Gastrocnemius medialis (tissue), 4 donors: ENCODE measurements at regions of chr15 and their contacts with region 1.

Region 1: GRCh38 chr15:84658080-84658787 is at the start of gene NMB:
- DNase-seq: peak; percentile 45 to 69
- ATAC-seq: peak; percentile 49 to 51
- H3K4me3 ChIP-seq: peak within 1 kb of the TSS; percentile 54 to 85 (median 58)
- H3K27ac ChIP-seq: peak within 1 kb of the TSS; percentile 74 to 86 (median 83)
- H3K4me1 ChIP-seq: peaks cover 12 to 20% of the 10 kb centered on the region in 2 donors
- H3K27me3 ChIP-seq: no peaks in the 10 kb centered on the region
- CTCF ChIP-seq: peak; percentile 30 to 88 (median 60)
- POLR2A ChIP-seq: no peak
- total RNA-seq, gene NMB: 0.94 to 1.6 (median 1.6) TPM in 3 of 4 donors, not detected in the other

Region 2: DNA sequence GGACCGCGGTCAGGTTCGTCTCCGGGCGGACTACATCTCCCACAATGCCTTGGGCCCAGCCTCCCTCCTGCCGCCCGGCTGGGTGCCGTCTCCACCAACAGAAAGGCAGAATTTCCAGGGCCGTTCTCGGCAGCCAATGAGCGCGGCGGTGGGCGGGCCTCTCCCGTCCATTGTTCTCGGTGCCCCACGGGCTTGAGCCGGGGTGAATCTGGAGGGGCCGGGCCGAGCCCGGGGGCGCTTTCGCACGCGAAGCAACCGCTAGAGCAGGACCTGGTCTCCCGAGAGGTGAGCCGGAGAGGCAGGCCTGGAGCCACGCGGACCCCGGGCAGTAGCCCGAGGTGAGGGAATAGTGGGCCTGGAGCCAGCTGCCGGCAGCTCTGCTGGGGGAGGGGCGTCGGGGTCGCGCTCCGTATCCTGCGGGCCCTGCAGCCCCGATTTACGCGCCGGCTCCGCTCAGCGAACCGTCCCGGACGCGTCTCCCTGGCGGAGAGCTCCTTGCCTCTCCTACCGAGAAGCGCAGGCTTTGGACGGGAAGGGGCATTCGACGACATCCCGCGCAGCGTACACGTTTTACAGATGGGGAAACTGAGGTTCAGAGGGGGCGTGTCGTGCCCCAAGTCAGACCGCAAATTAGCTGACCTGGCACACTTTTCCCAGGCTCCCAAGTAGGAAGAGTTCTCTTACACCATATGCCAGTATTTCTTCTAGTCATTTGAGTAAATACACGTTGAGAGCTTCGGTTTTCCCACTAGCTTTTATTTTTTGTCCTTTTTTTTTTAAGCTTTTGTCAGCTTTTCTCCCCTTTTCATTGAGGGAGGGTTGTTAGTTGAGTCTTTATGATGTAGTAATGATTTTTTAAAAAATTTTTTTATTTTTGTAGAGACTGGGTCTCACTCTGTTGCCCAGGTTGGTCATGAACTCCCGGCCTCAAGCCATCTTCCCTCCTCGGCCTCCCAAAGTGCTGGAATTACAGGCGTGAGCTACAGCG is 57.1 kb before region 1 on chr15 and contains the start of gene ZSCAN2:
- in situ Hi-C with region 1: loop called in 2 of 4 experiments (anchors 10 kb)
- intact Hi-C with region 1: loop called (anchors 1 kb)
- DNase-seq: peak; percentile 93 to 96
- ATAC-seq: peak; percentile 93 to 97
- H3K4me3 ChIP-seq: peak within 1 kb of the TSS; percentile 95 to 98 (median 96)
- H3K27ac ChIP-seq: peak within 1 kb of the TSS; percentile 82 to 88 (median 86)
- H3K4me1 ChIP-seq: peaks cover 6 to 9% of the 10 kb centered on the region in 2 donors
- H3K27me3 ChIP-seq: no peaks in the 10 kb centered on the region
- CTCF ChIP-seq: no peak
- POLR2A ChIP-seq: peak in 1 of 2 donors; percentile 13
- total RNA-seq, gene ZSCAN2: 6.1 to 10.3 (median 8.6) TPM

Region 3: GRCh38 chr15:84633311-84634227 is 24.7 kb before region 1 on chr15:
- in situ Hi-C with region 1: no loop called
- intact Hi-C with region 1: loop called (anchors 2 kb)
- DNase-seq: peak; percentile 36 to 61
- ATAC-seq: peak; percentile 66 to 67
- H3K4me3 ChIP-seq: peak overlapping the region; percentile 64 to 85 (median 76)
- H3K27ac ChIP-seq: peak overlapping the region; percentile 83 to 97 (median 92)
- H3K4me1 ChIP-seq: peaks cover 40 to 41% of the 10 kb centered on the region in 2 donors
- H3K27me3 ChIP-seq: no peaks in the 10 kb centered on the region
- CTCF ChIP-seq: peak in 1 of 5 experiments; percentile 19
- POLR2A ChIP-seq: peak; percentile 22 to 34

Region 4: GRCh38 chr15:84702961-84703482 is 44.8 kb after region 1 on chr15:
- in situ Hi-C with region 1: no loop called
- intact Hi-C with region 1: loop called (anchors 5 kb)
- DNase-seq: peak; percentile 32 to 37
- ATAC-seq: peak; percentile 55 to 77
- H3K4me3 ChIP-seq: no peak overlapping the region
- H3K27ac ChIP-seq: peak overlapping the region; percentile 20 to 62 (median 38)
- H3K4me1 ChIP-seq: peaks cover 9 to 28% of the 10 kb centered on the region in 2 donors
- H3K27me3 ChIP-seq: no peaks in the 10 kb centered on the region
- CTCF ChIP-seq: no peak
- POLR2A ChIP-seq: no peak

Region 5: GRCh38 chr15:84716036-84716799 is 58.0 kb after region 1 on chr15 and contains the start of gene SEC11A:
- in situ Hi-C with region 1: no loop called
- intact Hi-C with region 1: loop called (anchors 1 kb)
- DNase-seq: peak; percentile 95
- ATAC-seq: peak; percentile 95
- H3K4me3 ChIP-seq: peak within 1 kb of the TSS; percentile 87 to 94 (median 90)
- H3K27ac ChIP-seq: peak within 1 kb of the TSS; percentile 95 to 97 (median 96)
- H3K4me1 ChIP-seq: peaks cover 29 to 30% of the 10 kb centered on the region in 2 donors
- H3K27me3 ChIP-seq: no peaks in the 10 kb centered on the region
- CTCF ChIP-seq: no peak
- POLR2A ChIP-seq: peak; percentile 72 to 80
- total RNA-seq, gene SEC11A: 90.2 to 127 (median 118) TPM

Region 6: GRCh38 chr15:84818261-84819131 is 160.3 kb after region 1 on chr15:
- in situ Hi-C with region 1: no loop called
- intact Hi-C with region 1: loop called (anchors 1 kb)
- DNase-seq: peak; percentile 88 to 89
- ATAC-seq: peak; percentile 75 to 79
- H3K4me3 ChIP-seq: peak overlapping the region; percentile 71 to 97 (median 82)
- H3K27ac ChIP-seq: peak overlapping the region; percentile 94 to 99 (median 96)
- H3K4me1 ChIP-seq: peaks cover 46 to 64% of the 10 kb centered on the region in 2 donors
- H3K27me3 ChIP-seq: no peaks in the 10 kb centered on the region
- CTCF ChIP-seq: peak in 2 of 5 experiments; percentile 19 to 20
- POLR2A ChIP-seq: peak; percentile 82 to 90